ENCODE measurements at regions of chr9 and their contacts with region 1.

Region 1: DNA sequence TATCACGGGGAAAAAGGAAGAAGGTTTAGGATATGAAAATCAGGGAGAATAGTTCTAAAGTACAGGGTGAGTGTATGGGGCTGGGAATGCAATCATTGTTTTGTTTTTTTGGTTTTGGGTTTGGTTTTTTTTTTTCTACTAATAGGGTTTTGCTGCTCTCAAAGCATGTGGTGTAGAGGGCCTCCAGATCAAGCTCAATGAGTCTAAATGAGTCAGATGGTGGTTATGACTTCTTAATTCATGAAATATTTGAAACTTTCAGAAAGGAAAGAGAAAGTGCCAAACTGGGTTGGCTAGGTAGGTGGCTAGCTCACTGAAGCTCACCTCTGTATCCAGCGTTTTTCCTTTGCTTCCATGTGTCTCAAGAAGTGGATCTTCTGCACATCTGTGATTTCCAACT is 10.7 kb downstream of the OR1L8 start:
- DNase-seq: no peak
- ATAC-seq: peak; percentile 90
- H3K4me3 Mint-ChIP-seq: no peak overlapping the region
- H3K27ac Mint-ChIP-seq: no peak overlapping the region
- H3K4me1 Mint-ChIP-seq: peaks cover 8% of the 10 kb centered on the region
- H3K27me3 Mint-ChIP-seq: peaks cover 2% of the 10 kb centered on the region

Region 2: GRCh38 chr9:122797316-122798063 is 225.0 kb after region 1 on chr9:
- CTCF ChIA-PET with region 1: no interaction called
- POLR2A ChIA-PET with region 1: no interaction called
- intact Hi-C with region 1: loop called in 1 of 2 experiments (anchors 10 kb)
- DNase-seq: no peak
- ATAC-seq: peak; percentile 60
- H3K4me3 Mint-ChIP-seq: no peak overlapping the region
- H3K27ac Mint-ChIP-seq: no peak overlapping the region
- H3K4me1 Mint-ChIP-seq: no peaks in the 10 kb centered on the region
- H3K27me3 Mint-ChIP-seq: no peaks in the 10 kb centered on the region

Measured in activated CD4-positive, alpha-beta T cell treated with anti-CD3 and anti-CD28 coated beads for 36 hours (primary cell).